ENCODE measurements at regions of chr14 and their contacts with region 1.

Region 1: GRCh38 chr14:77097700-77098528 is at the start of gene CIPC:
- DNase-seq: peak; percentile 97 to 100 (median 99)
- ATAC-seq: peak; percentile 89
- H3K4me3 ChIP-seq: peak within 1 kb of the TSS; percentile 95 to 97
- H3K4me3 Mint-ChIP-seq: peak within 1 kb of the TSS; percentile 92
- H3K27ac ChIP-seq: peak within 1 kb of the TSS; percentile 97
- H3K27ac Mint-ChIP-seq: peak within 1 kb of the TSS; percentile 98
- H3K4me1 ChIP-seq: peaks cover 16% of the 10 kb centered on the region
- H3K4me1 Mint-ChIP-seq: peaks cover 44% of the 10 kb centered on the region
- H3K27me3 ChIP-seq: no peaks in the 10 kb centered on the region
- H3K27me3 Mint-ChIP-seq: no peaks in the 10 kb centered on the region
- CTCF ChIP-seq: no peak
- total RNA-seq, gene CIPC: 6.0 to 6.3 TPM

Region 2: GRCh38 chr14:75660630-75661494 is 1437.1 kb before region 1 on chr14 and contains the starts of genes ERG28 and TTLL5:
- CTCF ChIA-PET with region 1: no interaction called
- POLR2A ChIA-PET with region 1: no interaction called
- intact Hi-C with region 1: loop called (anchors 10 kb)
- DNase-seq: peak; percentile 94 to 99 (median 95)
- ATAC-seq: peak; percentile 93
- H3K4me3 ChIP-seq: peak within 1 kb of the TSS; percentile 86 to 87
- H3K4me3 Mint-ChIP-seq: peak within 1 kb of the TSS; percentile 98
- H3K27ac ChIP-seq: peak within 1 kb of the TSS; percentile 85 to 93
- H3K27ac Mint-ChIP-seq: peak within 1 kb of the TSS; percentile 97
- H3K4me1 ChIP-seq: peaks cover 10% of the 10 kb centered on the region
- H3K4me1 Mint-ChIP-seq: peaks cover 36% of the 10 kb centered on the region
- H3K27me3 ChIP-seq: no peaks in the 10 kb centered on the region
- H3K27me3 Mint-ChIP-seq: no peaks in the 10 kb centered on the region
- CTCF ChIP-seq: no peak
- total RNA-seq, gene ERG28: 6.6 to 6.7 TPM
- total RNA-seq, gene TTLL5: 17.6 to 17.7 TPM

Region 3: DNA sequence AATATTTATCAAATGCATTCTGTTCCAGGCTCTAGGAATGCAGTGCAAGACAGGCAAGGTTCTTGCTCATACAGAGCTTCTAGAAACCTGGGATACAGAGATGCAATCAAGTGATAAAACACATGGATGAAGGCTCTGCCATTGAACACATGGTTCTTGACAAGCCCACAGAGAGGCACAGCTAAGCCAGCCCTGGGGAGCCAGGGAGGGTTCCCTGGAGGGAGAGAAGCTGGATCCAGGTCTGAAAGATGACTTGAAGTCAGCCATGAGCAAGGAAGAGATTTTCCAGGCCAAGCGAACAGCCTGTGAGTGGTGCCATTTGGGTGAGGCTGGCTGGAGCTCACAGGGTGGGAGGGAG is 135.6 kb before region 1 on chr14:
- CTCF ChIA-PET with region 1: no interaction called
- POLR2A ChIA-PET with region 1: interaction called, 5 read pairs
- intact Hi-C with region 1: loop called in 1 of 2 experiments (anchors 2 kb)
- DNase-seq: no peak
- ATAC-seq: peak; percentile 3
- H3K4me3 ChIP-seq: peak overlapping the region; percentile 44 to 59
- H3K4me3 Mint-ChIP-seq: peak overlapping the region; percentile 84
- H3K27ac ChIP-seq: peak overlapping the region; percentile 63 to 78
- H3K27ac Mint-ChIP-seq: peak overlapping the region; percentile 97
- H3K4me1 ChIP-seq: peaks cover 59% of the 10 kb centered on the region
- H3K4me1 Mint-ChIP-seq: peaks cover 73% of the 10 kb centered on the region
- H3K27me3 ChIP-seq: no peaks in the 10 kb centered on the region
- H3K27me3 Mint-ChIP-seq: no peaks in the 10 kb centered on the region
- CTCF ChIP-seq: no peak

Region 4: GRCh38 chr14:77040059-77040740 is 57.7 kb before region 1 on chr14:
- CTCF ChIA-PET with region 1: no interaction called
- POLR2A ChIA-PET with region 1: no interaction called
- intact Hi-C with region 1: loop called (anchors 2 to 5 kb)
- DNase-seq: peak; percentile 94 to 100 (median 99)
- ATAC-seq: peak; percentile 77
- H3K4me3 ChIP-seq: peak overlapping the region; percentile 42 to 47
- H3K4me3 Mint-ChIP-seq: peak overlapping the region; percentile 86
- H3K27ac ChIP-seq: peak overlapping the region; percentile 90 to 94
- H3K27ac Mint-ChIP-seq: peak overlapping the region; percentile 99
- H3K4me1 ChIP-seq: peaks cover 74% of the 10 kb centered on the region
- H3K4me1 Mint-ChIP-seq: peaks cover 90% of the 10 kb centered on the region
- H3K27me3 ChIP-seq: no peaks in the 10 kb centered on the region
- H3K27me3 Mint-ChIP-seq: no peaks in the 10 kb centered on the region
- CTCF ChIP-seq: no peak

Region 5: GRCh38 chr14:77124345-77125280 is 26.7 kb after region 1 on chr14:
- CTCF ChIA-PET with region 1: interaction called, 13 read pairs
- POLR2A ChIA-PET with region 1: interaction called, 5 read pairs
- intact Hi-C with region 1: loop called (anchors 1 kb)
- DNase-seq: peak; percentile 25 to 85 (median 63)
- ATAC-seq: peak; percentile 79
- H3K4me3 ChIP-seq: peak overlapping the region; percentile 57 to 63
- H3K4me3 Mint-ChIP-seq: peak overlapping the region; percentile 81
- H3K27ac ChIP-seq: no peak overlapping the region
- H3K27ac Mint-ChIP-seq: peak overlapping the region; percentile 80
- H3K4me1 ChIP-seq: peaks cover 23% of the 10 kb centered on the region
- H3K4me1 Mint-ChIP-seq: peaks cover 47% of the 10 kb centered on the region
- H3K27me3 ChIP-seq: peaks cover 0 to 8% of the 10 kb centered on the region in 2 experiments
- H3K27me3 Mint-ChIP-seq: peaks cover 30% of the 10 kb centered on the region
- CTCF ChIP-seq: peak; percentile 63

Region 6: DNA sequence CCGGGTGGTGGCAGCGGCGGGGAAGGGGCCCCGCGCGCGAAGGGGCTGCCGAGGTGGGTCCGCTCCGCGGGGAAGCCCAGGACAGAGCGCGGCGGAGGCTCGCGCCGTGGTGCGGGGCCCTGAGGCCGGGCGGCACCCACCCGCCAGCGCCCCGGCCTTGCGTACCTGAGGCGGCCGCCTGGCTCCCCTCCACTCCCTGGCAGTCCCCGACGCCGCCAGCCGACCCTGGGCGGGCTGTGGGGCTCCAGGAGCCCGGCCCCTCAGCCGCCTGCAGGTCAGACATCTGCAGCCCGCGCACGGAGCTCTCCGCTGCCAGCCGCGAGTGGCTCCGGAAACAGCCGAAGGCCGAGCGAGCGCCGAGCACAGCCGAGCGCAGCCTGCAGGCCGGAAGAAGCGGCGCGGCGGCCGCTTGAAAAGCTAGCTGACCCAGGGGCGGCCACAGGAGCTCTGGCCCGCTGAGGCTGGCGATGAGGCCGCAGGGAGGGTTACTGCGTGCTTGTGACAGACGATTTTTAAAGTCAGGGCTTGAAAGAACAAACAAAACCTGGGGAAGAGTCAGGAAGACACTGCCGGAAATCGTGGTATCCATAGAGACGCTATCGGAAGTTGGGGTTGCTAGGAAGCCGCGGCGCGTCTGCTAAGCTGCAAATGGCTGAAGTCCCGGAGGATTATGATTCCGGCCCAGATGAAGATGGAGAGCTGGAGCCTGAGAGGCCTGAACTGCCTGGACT is 279.0 kb after region 1 on chr14 and contains the starts of genes SAMD15 and TMED8:
- CTCF ChIA-PET with region 1: no interaction called
- POLR2A ChIA-PET with region 1: no interaction called
- intact Hi-C with region 1: loop called in 1 of 2 experiments (anchors 2 kb)
- DNase-seq: peak; percentile 69 to 92 (median 82)
- ATAC-seq: peak; percentile 95
- H3K4me3 ChIP-seq: peak within 1 kb of the TSS; percentile 74 to 96
- H3K4me3 Mint-ChIP-seq: peak within 1 kb of the TSS; percentile 89
- H3K27ac ChIP-seq: peak within 1 kb of the TSS; percentile 62 to 91
- H3K27ac Mint-ChIP-seq: peak within 1 kb of the TSS; percentile 87
- H3K4me1 ChIP-seq: peaks cover 17% of the 10 kb centered on the region
- H3K4me1 Mint-ChIP-seq: peaks cover 38% of the 10 kb centered on the region
- H3K27me3 ChIP-seq: no peaks in the 10 kb centered on the region
- H3K27me3 Mint-ChIP-seq: no peaks in the 10 kb centered on the region
- CTCF ChIP-seq: no peak
- total RNA-seq, gene SAMD15: 0.50 to 0.52 TPM
- total RNA-seq, gene TMED8: 4.3 to 4.6 TPM

Region 7: GRCh38 chr14:77603654-77604255 is 505.8 kb after region 1 on chr14:
- CTCF ChIA-PET with region 1: no interaction called
- POLR2A ChIA-PET with region 1: no interaction called
- intact Hi-C with region 1: no loop called
- DNase-seq: no peak
- ATAC-seq: peak; percentile 36
- H3K4me3 ChIP-seq: no peak overlapping the region
- H3K4me3 Mint-ChIP-seq: no peak overlapping the region
- H3K27ac ChIP-seq: no peak overlapping the region
- H3K27ac Mint-ChIP-seq: no peak overlapping the region
- H3K4me1 ChIP-seq: peaks cover 48% of the 10 kb centered on the region
- H3K4me1 Mint-ChIP-seq: peaks cover 76% of the 10 kb centered on the region
- H3K27me3 ChIP-seq: no peaks in the 10 kb centered on the region
- H3K27me3 Mint-ChIP-seq: no peaks in the 10 kb centered on the region
- CTCF ChIP-seq: no peak

Region 8: DNA sequence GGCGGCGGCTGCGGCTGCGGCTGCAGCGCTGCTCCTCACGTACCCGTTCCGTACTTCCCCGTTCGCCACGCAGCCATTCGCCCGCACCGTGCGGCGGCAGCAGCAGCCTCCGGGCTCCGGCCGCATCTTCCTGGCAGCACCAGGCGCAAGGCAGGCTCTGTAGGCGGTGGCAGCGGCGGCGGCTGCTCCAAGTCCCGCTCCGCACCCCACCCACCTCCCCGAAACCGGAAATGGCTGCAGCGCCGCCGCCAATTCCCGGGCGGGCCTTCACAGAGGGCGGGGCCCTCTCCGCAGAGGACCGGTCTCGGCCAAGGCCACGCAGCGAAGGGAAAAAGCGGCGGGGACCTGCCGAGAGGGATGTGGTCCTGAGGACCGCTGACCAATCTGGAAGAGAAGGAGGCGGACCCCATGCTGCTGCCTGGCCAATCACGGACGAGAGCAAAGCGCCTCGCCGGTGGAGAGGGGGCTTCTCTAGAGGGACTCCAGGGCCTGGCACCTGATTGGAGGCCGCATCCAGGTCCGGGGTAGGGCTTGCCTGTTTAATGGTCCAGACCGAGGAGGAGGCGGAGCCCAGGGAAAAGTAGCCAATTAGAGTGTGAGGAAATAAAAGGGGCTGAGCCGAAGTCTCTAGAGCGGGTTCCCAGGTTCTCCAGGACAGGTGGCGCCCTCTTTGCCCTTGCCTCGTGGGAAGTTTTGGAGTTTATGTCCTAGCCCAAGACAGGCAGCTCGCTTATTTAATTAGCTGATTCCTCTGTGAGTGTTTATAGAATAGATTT is 518.7 kb after region 1 on chr14 and contains the start of gene SPTLC2:
- CTCF ChIA-PET with region 1: no interaction called
- POLR2A ChIA-PET with region 1: no interaction called
- intact Hi-C with region 1: loop called in 1 of 2 experiments (anchors 1 kb)
- DNase-seq: peak; percentile 92 to 99 (median 97)
- ATAC-seq: peak; percentile 96
- H3K4me3 ChIP-seq: peak within 1 kb of the TSS; percentile 75
- H3K4me3 Mint-ChIP-seq: peak within 1 kb of the TSS; percentile 90
- H3K27ac ChIP-seq: peak within 1 kb of the TSS; percentile 58 to 69
- H3K27ac Mint-ChIP-seq: peak within 1 kb of the TSS; percentile 87
- H3K4me1 ChIP-seq: peaks cover 12% of the 10 kb centered on the region
- H3K4me1 Mint-ChIP-seq: peaks cover 40% of the 10 kb centered on the region
- H3K27me3 ChIP-seq: no peaks in the 10 kb centered on the region
- H3K27me3 Mint-ChIP-seq: no peaks in the 10 kb centered on the region
- CTCF ChIP-seq: no peak
- total RNA-seq, gene SPTLC2: 14.4 to 15.8 TPM

Measured in CD8-positive, alpha-beta T cell (primary cell).